ENCODE measurements at regions of chr18 and their contacts with region 1.

Region 1: DNA sequence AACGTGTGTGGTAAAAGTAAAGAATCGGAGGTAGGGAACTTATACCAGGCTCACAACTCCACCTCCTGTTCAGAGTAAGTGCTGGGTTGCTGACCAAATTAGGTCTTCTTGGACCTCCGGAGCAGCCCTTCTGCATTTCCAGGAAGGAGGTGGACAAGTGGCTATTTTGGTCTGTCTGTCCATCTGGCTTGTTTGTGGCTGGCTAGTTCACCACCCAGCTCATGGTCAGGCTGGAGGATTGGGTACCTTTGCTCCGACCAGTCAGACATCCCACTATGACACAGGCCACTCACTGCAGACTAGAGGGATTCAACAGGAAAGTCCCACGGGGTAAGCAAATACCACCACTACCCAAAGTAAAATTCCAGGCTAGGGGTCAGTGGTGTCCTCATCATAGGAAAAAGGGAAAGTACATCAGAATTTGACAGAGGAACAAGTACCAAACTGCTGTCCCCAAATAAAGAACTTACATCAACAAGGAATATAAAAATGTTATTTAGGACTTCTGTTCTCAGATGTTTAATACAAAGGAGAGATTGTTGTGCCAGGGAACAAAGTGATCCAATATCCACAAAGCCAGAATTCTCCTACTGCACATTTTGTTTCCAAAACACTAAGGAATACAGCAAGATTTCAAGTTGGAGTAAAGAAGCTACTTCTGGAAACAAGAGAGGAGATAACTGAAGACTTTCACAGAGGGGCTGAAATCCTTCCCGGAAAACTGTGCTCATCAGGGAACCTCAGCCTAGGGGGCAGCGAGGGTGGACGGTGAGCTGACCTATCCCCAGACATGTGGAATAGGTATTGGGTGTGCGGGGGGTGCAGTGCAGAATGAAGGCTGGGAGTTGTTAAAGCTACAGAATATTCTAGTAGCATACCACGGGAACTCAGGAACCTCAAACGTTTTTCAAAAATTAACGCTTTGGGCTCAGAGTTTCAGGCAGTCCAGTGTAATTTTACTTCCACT is 56.9 kb downstream of the BCL2 start:
- DNase-seq: no peak
- ATAC-seq: no peak
- H3K4me3 ChIP-seq: no peak overlapping the region
- H3K4me3 Mint-ChIP-seq: no peak overlapping the region
- H3K27ac ChIP-seq: no peak overlapping the region
- H3K27ac Mint-ChIP-seq: no peak overlapping the region
- H3K4me1 ChIP-seq: peaks cover 34% of the 10 kb centered on the region
- H3K4me1 Mint-ChIP-seq: peaks cover 63% of the 10 kb centered on the region
- H3K27me3 ChIP-seq: no peaks in the 10 kb centered on the region
- H3K27me3 Mint-ChIP-seq: no peaks in the 10 kb centered on the region
- CTCF ChIP-seq: no peak

Region 2: DNA sequence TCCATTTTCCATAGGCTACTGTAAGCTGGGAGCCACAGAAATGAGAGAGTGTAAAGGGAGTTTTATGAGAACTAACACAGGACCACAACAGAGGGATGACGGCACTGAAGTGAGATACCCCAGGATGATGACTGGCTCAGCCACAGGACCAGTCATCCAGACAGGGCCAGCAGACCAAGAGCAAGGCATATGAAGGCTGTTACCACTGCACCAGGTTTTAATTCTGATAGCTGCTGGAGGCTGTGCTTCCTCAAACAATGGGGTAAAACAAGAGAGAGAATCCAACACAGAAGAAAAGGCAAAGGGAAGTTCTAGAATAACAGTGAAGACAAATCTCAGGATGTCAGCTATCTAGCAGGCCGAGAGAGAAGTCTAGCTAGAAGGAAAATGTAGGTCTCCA is 38.0 kb before region 1 on chr18:
- CTCF ChIA-PET with region 1: no interaction called
- POLR2A ChIA-PET with region 1: no interaction called
- intact Hi-C with region 1: loop called in 1 of 2 experiments (anchors 5 kb)
- DNase-seq: peak in 5 of 9 experiments; percentile 34 to 47 (median 38)
- ATAC-seq: peak; percentile 78
- H3K4me3 ChIP-seq: peak overlapping the region in 1 of 2 experiments; percentile 10
- H3K4me3 Mint-ChIP-seq: peak overlapping the region; percentile 20
- H3K27ac ChIP-seq: peak overlapping the region; percentile 17 to 25
- H3K27ac Mint-ChIP-seq: peak overlapping the region; percentile 84
- H3K4me1 ChIP-seq: peaks cover 75% of the 10 kb centered on the region
- H3K4me1 Mint-ChIP-seq: peaks cover 70% of the 10 kb centered on the region
- H3K27me3 ChIP-seq: no peaks in the 10 kb centered on the region
- H3K27me3 Mint-ChIP-seq: no peaks in the 10 kb centered on the region
- CTCF ChIP-seq: no peak

Region 3: GRCh38 chr18:63395503-63395902 is 132.9 kb after region 1 on chr18:
- CTCF ChIA-PET with region 1: no interaction called
- POLR2A ChIA-PET with region 1: no interaction called
- intact Hi-C with region 1: no loop called
- DNase-seq: no peak
- ATAC-seq: no peak
- H3K4me3 ChIP-seq: no peak overlapping the region
- H3K4me3 Mint-ChIP-seq: no peak overlapping the region
- H3K27ac ChIP-seq: no peak overlapping the region
- H3K27ac Mint-ChIP-seq: no peak overlapping the region
- H3K4me1 ChIP-seq: no peaks in the 10 kb centered on the region
- H3K4me1 Mint-ChIP-seq: peaks cover 6% of the 10 kb centered on the region
- H3K27me3 ChIP-seq: no peaks in the 10 kb centered on the region
- H3K27me3 Mint-ChIP-seq: no peaks in the 10 kb centered on the region
- CTCF ChIP-seq: no peak

Region 4: DNA sequence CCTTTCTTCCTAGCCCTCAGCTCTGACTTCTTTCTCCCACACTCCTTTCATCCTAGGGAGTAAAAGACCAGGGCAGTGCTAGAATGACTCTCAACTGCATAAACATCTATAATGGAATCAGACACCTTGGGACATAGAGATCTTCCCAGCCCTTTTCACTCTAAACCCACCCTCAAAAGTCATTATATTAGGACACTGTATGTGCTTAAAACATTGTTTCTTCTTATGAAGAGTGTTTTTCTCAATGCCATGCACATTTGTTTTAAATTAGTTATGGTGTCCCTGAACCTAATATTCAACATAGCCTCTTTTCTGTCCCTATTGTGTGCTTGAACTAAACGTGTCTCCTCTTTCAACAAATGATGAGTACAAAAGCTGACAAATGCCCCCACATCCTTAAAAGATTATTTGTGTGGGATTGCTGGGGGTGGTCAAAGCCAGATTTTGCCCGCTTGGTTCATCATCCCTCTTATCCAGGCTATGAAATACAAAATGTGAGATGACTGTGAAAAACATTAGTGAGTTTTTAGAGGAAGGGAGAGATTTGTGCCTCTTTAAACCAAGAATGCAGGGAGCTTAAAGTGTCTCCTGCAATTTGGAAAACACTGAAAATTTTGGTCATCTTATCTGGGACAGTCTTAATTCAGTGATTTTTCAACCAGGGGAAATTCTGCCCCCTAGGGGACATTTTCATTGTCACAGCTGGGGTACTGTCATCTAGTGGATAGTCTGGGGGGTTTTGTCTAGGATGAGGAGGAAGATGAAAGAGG is 243.1 kb after region 1 on chr18:
- CTCF ChIA-PET with region 1: no interaction called
- POLR2A ChIA-PET with region 1: no interaction called
- intact Hi-C with region 1: no loop called
- DNase-seq: peak in 2 of 9 experiments; percentile 9 to 14
- ATAC-seq: no peak
- H3K4me3 ChIP-seq: no peak overlapping the region
- H3K4me3 Mint-ChIP-seq: no peak overlapping the region
- H3K27ac ChIP-seq: no peak overlapping the region
- H3K27ac Mint-ChIP-seq: no peak overlapping the region
- H3K4me1 ChIP-seq: no peaks in the 10 kb centered on the region
- H3K4me1 Mint-ChIP-seq: no peaks in the 10 kb centered on the region
- H3K27me3 ChIP-seq: peaks cover 0 to 6% of the 10 kb centered on the region in 2 experiments
- H3K27me3 Mint-ChIP-seq: peaks cover 29% of the 10 kb centered on the region
- CTCF ChIP-seq: peak; percentile 16

Region 5: DNA sequence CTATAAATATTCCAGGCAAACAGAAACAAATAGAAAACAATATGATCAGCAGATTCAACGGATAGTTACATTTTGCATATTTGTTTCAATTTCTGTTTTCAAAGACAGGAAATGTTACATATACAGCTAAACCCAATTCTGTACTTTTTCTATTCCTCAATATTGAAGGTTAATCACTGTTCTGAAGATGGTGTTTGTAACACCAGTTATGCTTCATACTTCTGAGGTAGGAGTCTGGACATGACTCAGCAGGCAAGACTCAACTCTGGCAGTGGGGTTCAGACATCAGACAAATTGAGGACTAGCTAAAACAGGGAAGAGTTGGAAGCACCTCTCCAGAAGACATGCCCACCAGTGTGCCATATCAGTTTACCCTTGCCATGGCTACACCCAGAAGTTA is 341.1 kb after region 1 on chr18:
- CTCF ChIA-PET with region 1: no interaction called
- POLR2A ChIA-PET with region 1: no interaction called
- intact Hi-C with region 1: no loop called
- DNase-seq: no peak
- ATAC-seq: no peak
- H3K4me3 ChIP-seq: no peak overlapping the region
- H3K4me3 Mint-ChIP-seq: no peak overlapping the region
- H3K27ac ChIP-seq: no peak overlapping the region
- H3K27ac Mint-ChIP-seq: no peak overlapping the region
- H3K4me1 ChIP-seq: no peaks in the 10 kb centered on the region
- H3K4me1 Mint-ChIP-seq: no peaks in the 10 kb centered on the region
- H3K27me3 ChIP-seq: no peaks in the 10 kb centered on the region
- H3K27me3 Mint-ChIP-seq: peaks cover 5% of the 10 kb centered on the region
- CTCF ChIP-seq: no peak